Heart right ventricle (tissue), 16 donors: ENCODE measurements at regions of chr7 and their contacts with region 1.

Region 1: GRCh38 chr7:157840914-157841772 is 504.3 kb downstream of the DNAJB6 start:
- DNase-seq: no peak
- ATAC-seq: no peak
- H3K4me3 ChIP-seq: no peak overlapping the region
- H3K27ac ChIP-seq: no peak overlapping the region
- H3K4me1 ChIP-seq: no peaks in the 10 kb centered on the region
- H3K27me3 ChIP-seq: peaks cover 0 to 44% (median 19%) of the 10 kb centered on the region in 7 donors
- CTCF ChIP-seq: no peak

Region 2: DNA sequence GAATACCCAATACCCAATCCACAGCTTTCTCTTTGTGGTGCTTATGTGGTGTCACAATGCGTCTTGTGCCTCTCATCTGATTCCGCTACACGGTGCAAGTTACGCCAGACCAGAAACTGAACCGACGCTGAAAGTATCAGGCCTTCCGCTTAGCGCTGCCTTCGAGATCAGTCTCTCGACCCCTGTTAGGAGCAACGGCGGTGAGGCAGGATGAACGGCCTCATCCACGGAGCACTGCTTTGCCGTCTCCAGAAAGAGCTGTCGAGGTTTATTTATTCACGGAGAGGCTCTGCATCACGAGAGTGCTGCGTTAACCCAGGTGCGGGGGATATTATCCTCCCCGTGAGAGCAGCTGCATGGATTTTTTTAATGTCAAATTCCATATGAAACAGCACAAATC is 40.0 kb before region 1 on chr7:
- intact Hi-C with region 1: loop called in 1 of 10 experiments (anchors 1 kb)
- DNase-seq: no peak
- ATAC-seq: no peak
- H3K4me3 ChIP-seq: no peak overlapping the region
- H3K27ac ChIP-seq: no peak overlapping the region
- H3K4me1 ChIP-seq: no peaks in the 10 kb centered on the region
- H3K27me3 ChIP-seq: peaks cover 0 to 4% (median 0%) of the 10 kb centered on the region in 7 donors
- CTCF ChIP-seq: no peak

Region 3: DNA sequence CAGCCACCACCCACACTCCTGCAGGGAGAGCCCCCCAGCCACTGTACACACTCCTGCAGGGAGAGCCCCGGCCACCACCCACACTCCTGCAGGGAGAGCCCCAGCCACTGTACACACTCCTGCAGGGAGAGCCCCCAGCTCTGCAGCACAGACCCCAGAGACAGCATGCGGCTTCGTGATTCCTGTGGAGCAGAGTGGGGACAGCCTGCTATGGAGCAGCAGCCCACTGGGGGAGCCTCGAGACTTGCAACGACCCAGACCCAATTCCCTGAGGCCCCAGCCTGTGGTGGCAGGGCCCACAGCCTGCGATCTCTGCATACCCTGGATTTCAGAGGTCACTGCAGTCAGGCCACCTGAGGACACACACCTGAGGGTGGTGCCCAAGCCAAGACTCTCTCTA is 18.8 kb after region 1 on chr7:
- intact Hi-C with region 1: loop called in 1 of 10 experiments (anchors 2 kb)
- DNase-seq: no peak
- ATAC-seq: no peak
- H3K4me3 ChIP-seq: no peak overlapping the region
- H3K27ac ChIP-seq: no peak overlapping the region
- H3K4me1 ChIP-seq: no peaks in the 10 kb centered on the region
- H3K27me3 ChIP-seq: peaks cover 0 to 27% (median 0%) of the 10 kb centered on the region in 7 donors
- CTCF ChIP-seq: no peak

Region 4: DNA sequence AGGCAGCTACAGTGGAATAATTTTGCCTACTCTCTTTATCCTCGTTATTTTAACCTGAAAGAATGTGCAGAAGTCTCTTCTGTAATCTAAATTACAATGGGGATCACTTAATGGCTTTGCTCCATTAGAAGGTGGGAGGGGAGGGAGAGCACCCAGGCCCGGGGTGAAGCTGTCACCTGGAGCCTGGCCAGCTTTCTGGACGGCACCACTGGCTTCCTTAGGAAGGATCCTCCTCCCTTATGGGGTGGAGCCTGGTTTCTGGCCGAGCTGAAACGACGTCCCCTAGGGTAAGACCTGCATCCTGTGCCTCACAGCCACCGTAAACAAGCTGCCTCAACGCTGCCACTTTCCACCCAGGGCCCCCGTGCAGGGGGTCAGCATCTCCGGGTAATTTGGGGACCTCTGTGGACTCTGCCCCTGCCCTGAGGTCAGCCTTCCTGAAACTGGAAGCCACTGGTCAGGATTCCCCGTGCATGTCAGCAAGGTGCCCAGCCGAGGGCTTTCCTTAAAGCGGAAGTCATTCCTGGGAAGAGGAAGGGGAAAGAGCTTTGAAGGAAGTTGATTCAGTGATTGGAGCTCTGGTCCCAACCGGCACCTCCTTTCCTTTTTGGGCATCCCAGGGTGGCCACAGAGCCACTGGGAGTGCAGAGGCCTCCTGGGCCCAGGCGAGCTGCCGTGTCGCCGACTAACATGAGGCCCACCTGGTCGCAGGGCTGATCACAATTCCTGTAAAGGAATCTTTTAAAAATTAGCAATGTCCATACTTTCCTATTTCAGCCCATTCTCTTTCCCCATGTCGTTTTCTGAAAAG is 64.7 kb after region 1 on chr7:
- intact Hi-C with region 1: no loop called
- DNase-seq: peak; percentile 30 to 50
- ATAC-seq: peak; percentile 66 to 87 (median 78)
- H3K4me3 ChIP-seq: peak overlapping the region in 4 of 10 donors; percentile 11 to 18 (median 18)
- H3K27ac ChIP-seq: peak overlapping the region in 8 of 10 donors; percentile 9 to 73 (median 47)
- H3K4me1 ChIP-seq: peaks cover 0 to 15% (median 0%) of the 10 kb centered on the region in 9 donors
- H3K27me3 ChIP-seq: peaks cover 0 to 13% (median 0%) of the 10 kb centered on the region in 7 donors
- CTCF ChIP-seq: no peak

Region 5: GRCh38 chr7:158140538-158141220 is 299.5 kb after region 1 on chr7:
- intact Hi-C with region 1: no loop called
- DNase-seq: no peak
- ATAC-seq: no peak
- H3K4me3 ChIP-seq: no peak overlapping the region
- H3K27ac ChIP-seq: no peak overlapping the region
- H3K4me1 ChIP-seq: no peaks in the 10 kb centered on the region
- H3K27me3 ChIP-seq: no peaks in the 10 kb centered on the region
- CTCF ChIP-seq: no peak